ENCODE measurements at regions of chr19 and their contacts with region 1.

Region 1: DNA sequence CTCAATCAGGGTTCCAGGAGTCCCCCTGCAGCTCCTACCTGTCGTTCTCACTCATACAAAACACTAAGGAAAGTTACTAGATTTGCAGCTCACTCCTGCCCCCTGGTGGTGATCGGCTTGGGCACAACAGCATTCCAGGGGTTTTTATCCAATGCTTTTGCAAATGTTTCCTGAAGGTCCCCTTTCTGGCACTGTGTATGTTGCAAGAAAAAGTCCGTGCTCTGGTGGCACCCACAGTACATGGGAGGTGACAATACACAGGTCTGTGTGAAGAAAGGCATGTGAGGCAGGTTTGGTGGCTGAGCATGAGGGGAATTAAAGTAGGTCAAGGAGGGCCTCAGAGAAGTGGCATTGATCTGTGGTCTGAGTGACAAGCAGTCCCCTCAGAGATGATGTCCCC is 8.6 kb upstream of the TYK2 start:
- DNase-seq: no peak
- H3K4me3 ChIP-seq: no peak overlapping the region
- H3K27ac ChIP-seq: no peak overlapping the region
- H3K4me1 ChIP-seq: peaks cover 0 to 10% (median 4%) of the 10 kb centered on the region in 3 donors
- H3K27me3 ChIP-seq: peaks cover 0 to 3% (median 0%) of the 10 kb centered on the region in 4 donors
- CTCF ChIP-seq: peak; percentile 88 to 96 (median 94)
- POLR2A ChIP-seq: no peak

Region 2: DNA sequence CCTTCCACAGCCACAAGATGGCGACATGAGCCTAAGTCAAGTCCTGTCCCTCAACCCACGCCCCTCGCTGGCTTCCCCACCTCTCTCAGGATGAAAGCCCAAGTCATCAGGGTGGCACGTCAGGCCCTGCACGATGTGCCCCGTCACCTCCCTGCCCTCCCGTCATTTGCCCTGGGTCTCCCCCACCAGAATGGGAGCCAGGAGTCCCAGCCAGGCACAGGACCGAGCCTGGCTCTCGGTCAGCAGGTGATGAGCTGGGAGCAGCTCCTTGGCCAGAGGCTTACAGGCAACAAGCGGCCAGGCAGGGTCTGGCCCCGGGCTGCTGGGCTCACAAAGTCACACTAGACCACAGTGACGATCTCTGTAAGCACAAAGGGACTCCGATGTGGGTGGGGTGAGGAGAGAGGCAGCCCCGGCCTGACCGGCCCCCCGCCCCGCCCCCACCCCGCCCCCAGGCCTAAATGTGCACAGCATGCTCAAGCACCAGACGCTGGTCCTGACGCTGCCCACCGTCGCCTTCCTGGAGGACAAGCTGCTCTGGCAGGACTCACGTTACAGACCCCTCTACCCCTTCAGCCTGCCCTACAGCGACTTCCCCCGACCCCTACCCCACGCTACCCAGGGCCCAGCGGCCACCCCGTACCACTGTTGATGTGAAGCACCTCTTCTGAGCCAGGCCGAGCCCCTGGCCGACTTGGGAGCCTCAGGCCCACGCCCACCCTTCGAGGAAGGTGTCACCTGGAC is 129.6 kb before region 1 on chr19:
- intact Hi-C with region 1: no loop called
- DNase-seq: no peak
- H3K4me3 ChIP-seq: no peak overlapping the region
- H3K27ac ChIP-seq: peak overlapping the region in 3 of 4 donors; percentile 9 to 49 (median 26)
- H3K4me1 ChIP-seq: peaks cover 3 to 21% (median 13%) of the 10 kb centered on the region in 3 donors
- H3K27me3 ChIP-seq: no peaks in the 10 kb centered on the region
- CTCF ChIP-seq: peak; percentile 41 to 73 (median 60)
- POLR2A ChIP-seq: no peak

Region 3: GRCh38 chr19:10269333-10270179 is 119.4 kb before region 1 on chr19:
- intact Hi-C with region 1: loop called (anchors 2 kb)
- DNase-seq: peak; percentile 40
- H3K4me3 ChIP-seq: peak overlapping the region; percentile 27 to 67 (median 48)
- H3K27ac ChIP-seq: peak overlapping the region; percentile 76 to 93 (median 84)
- H3K4me1 ChIP-seq: peaks cover 21 to 61% (median 21%) of the 10 kb centered on the region in 3 donors
- H3K27me3 ChIP-seq: peaks cover 0 to 18% (median 0%) of the 10 kb centered on the region in 4 donors
- CTCF ChIP-seq: peak; percentile 93 to 98 (median 96)
- POLR2A ChIP-seq: no peak

Measured in esophagus squamous epithelium (tissue), 5 donors.